Calu3 (cell line): ENCODE measurements at regions of chr3 and their contacts with region 1.

Region 1: DNA sequence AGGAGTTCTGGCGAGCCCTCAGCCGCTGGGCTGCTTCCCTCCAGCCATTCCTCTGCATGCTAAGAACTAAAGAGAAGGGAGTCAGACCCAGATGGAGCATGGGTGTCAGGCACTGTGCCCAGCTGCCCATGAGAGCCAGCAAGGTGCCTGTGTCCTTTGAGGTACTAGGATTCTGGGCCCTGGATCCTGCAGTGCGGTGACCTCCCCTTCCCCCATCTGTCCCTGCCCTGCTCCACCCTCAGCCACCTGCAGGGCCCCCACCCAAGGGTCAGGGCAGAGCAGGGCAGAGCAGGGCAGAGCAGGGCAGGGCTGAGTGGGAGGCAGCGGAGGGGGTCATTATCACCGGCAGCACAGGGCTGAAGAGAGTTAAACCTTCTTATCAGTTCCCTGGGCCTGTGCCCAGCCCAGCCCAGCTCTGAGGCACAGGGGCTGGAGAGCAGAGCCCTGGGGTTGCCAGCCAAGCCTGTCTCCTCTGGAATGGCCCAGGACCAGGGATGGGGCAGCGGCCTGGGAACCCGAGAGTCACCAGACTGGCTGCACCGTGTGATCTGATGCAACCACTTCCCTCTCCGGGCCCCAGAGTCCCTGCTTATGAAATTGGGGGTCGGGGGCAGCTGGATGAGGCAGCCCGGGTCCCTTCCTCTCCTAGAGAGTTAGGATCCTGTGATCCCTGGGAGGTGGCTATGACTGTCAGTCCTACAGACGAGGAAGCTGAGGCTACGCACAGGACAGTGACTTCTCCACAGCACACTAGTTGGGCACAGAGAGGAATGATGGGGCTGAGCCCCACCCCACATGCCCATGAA is 17.3 kb downstream of the ZDHHC19 start:
- DNase-seq: no peak
- H3K4me3 Mint-ChIP-seq: no peak overlapping the region
- H3K27ac Mint-ChIP-seq: no peak overlapping the region
- H3K4me1 Mint-ChIP-seq: no peaks in the 10 kb centered on the region
- H3K27me3 Mint-ChIP-seq: no peaks in the 10 kb centered on the region
- CTCF ChIP-seq: no peak

Region 2: DNA sequence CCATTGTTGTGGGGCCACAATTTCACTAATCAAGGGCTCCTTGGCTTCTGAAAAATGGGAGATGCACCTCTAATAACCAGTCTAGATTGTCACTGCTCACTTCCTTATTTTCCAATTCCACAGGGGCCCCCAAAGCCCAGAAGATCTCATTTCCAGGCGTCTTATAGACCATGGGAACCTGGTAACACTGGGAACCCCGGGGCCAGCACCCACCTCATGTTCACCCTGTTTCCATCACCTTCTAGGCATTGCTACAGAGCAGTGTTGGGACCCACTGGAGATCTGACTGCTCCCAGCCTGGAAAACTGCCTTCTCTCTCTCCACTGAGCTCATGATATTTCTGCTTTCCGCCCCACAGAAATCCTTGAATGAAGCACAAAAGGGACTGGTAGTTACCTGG is 173.6 kb before region 1 on chr3:
- CTCF ChIA-PET with region 1: no interaction called
- intact Hi-C with region 1: loop called (anchors 2 kb)
- DNase-seq: no peak
- H3K4me3 Mint-ChIP-seq: no peak overlapping the region
- H3K27ac Mint-ChIP-seq: no peak overlapping the region
- H3K4me1 Mint-ChIP-seq: peaks cover 7% of the 10 kb centered on the region
- H3K27me3 Mint-ChIP-seq: peaks cover 55% of the 10 kb centered on the region
- CTCF ChIP-seq: no peak

Region 3: DNA sequence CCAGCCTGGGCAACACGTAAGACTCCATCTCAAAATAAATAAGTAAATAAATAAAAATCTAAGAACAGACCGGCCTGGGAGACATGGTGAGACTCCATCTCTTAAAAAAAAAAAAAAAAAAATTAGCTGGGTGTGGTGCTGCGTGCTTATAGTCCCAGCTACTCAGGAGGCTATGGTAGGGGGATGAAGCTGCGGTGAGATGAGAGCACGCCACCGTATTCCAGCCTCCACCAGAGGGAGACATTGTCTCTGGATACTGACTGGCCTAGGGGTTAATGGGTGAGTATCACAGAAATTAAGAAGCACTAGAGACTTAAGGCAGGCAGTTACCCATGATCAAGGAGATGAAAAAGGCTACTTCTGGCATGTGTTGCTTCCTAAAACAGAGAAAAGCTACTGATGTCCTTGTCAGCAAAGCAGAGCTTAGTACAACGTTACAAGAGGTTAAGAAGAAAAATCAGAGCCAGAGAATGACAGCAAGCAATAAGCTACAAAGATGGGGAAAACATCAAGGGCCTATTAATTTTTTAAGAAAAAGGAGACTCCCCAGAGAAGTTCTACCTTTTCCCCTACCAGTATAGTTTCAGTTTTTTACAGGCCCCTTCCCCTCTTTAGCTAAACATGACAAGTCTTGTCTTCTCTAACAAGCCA is 120.6 kb before region 1 on chr3:
- CTCF ChIA-PET with region 1: interaction called, 6 read pairs
- intact Hi-C with region 1: loop called (anchors 2 kb)
- DNase-seq: peak; percentile 55
- H3K4me3 Mint-ChIP-seq: no peak overlapping the region
- H3K27ac Mint-ChIP-seq: no peak overlapping the region
- H3K4me1 Mint-ChIP-seq: no peaks in the 10 kb centered on the region
- H3K27me3 Mint-ChIP-seq: no peaks in the 10 kb centered on the region
- CTCF ChIP-seq: peak; percentile 63

Region 4: GRCh38 chr3:196432137-196432879 is 238.4 kb after region 1 on chr3 and contains the start of gene UBXN7:
- CTCF ChIA-PET with region 1: no interaction called
- intact Hi-C with region 1: no loop called
- DNase-seq: peak; percentile 93
- H3K4me3 Mint-ChIP-seq: peak within 1 kb of the TSS; percentile 94
- H3K27ac Mint-ChIP-seq: peak within 1 kb of the TSS; percentile 82
- H3K4me1 Mint-ChIP-seq: no peaks in the 10 kb centered on the region
- H3K27me3 Mint-ChIP-seq: no peaks in the 10 kb centered on the region
- CTCF ChIP-seq: no peak
- total RNA-seq, gene UBXN7: 46.1 and 49.0 TPM in 2 replicates